ENCODE measurements at regions of chr3 and their contacts with region 1.

Region 1: DNA sequence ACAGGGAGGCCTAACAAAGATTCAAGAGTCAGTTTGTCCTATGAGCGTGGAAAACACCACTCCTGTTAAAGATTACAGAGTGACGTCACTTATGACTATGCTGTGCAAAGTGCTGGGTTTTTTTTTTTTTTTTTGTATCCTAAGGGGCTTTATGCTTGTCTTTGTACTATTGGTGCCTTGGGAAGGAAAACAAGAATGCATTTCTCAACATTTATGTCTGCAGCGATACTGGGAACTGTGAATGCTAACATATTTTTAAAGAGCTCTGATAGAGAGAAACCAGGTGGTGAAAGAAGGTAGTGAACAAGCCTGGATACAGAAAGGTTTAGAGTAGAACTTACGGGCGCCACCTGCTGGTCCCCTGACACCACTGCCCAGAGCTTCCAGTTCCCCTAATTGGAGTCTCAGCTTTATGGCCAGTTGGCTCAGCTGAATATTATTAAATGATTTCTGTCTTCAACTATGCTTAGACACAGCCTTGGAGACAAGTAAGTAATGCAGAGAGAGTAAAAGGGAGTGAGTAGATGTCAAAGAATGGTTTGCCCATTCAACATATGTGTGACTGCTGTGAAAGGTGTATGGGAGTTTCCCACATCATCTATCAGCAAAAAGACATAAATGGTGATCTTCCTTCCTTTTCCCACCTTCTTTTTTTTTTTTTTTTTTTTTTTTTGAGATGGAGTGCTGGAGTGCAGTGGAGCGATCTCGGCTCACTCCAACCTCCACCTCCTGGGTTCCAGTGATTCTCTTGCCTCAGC is 807.9 kb upstream of the CFAP20DC start:
- H3K4me3 Mint-ChIP-seq: no peak overlapping the region
- H3K27ac Mint-ChIP-seq: no peak overlapping the region
- H3K4me1 Mint-ChIP-seq: no peaks in the 10 kb centered on the region
- H3K27me3 Mint-ChIP-seq: no peaks in the 10 kb centered on the region

Region 2: DNA sequence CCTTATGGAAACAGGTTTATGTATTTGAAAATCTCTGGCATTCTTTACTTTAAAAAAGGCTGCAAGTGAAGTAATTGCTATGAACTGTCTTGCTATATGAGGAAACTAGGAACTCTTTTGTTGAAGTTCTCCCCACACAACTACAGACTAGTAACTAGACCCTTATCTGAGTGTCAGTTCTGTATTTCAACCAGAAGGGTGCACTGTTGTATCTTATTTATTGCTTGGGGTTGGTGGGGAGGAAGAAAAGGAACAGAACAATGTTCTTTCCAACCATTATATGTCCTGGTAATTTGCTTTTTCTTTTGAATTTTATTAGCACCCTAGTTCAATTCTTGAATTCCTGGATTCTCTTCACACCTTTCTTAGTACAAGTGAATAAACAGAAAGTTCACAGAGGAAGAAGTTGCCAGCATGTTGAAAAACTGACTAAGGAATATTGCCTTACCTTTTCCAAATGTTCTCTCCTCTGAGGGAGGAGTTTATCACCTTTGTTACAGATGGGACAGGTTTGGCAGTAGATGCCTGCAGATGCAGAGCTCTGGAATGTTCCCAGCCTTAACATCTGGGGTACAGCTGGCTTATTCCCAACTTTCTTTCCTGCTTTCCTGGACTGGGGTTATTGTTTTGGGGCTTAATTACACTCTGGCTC is 645.5 kb before region 1 on chr3:
- intact Hi-C with region 1: loop called (anchors 1 kb)
- H3K4me3 Mint-ChIP-seq: no peak overlapping the region
- H3K27ac Mint-ChIP-seq: no peak overlapping the region
- H3K4me1 Mint-ChIP-seq: no peaks in the 10 kb centered on the region
- H3K27me3 Mint-ChIP-seq: peaks cover 4% of the 10 kb centered on the region

Region 3: DNA sequence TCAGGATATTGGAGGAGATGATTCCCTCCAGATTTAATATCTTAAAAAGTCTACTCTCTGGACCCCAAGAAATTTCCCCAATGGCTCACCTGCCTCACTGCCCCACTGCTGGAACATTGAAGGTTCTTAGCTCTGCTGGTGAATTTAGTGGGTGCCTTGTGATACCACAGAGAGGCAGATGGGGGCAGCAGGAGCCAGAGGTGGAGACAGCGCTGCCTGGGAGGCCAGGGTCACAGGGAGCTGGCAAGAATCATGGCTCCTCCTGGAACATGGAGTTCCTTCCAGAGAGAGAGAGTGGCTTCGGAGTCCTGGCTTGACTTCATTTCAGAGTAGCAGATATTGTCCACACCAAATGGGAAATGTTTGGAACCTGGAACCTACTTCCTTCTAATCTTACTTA is 544.4 kb before region 1 on chr3:
- intact Hi-C with region 1: loop called (anchors 5 kb)
- H3K4me3 Mint-ChIP-seq: no peak overlapping the region
- H3K27ac Mint-ChIP-seq: no peak overlapping the region
- H3K4me1 Mint-ChIP-seq: no peaks in the 10 kb centered on the region
- H3K27me3 Mint-ChIP-seq: peaks cover 4% of the 10 kb centered on the region

Measured in dendritic cell treated with granulocyte-macrophage colony-stimulating factor and Interleukin-4, amounts not matched to agents 40 ng/mL and 50 ng/mL, for 4 days (primary cell).